Endothelial cell of umbilical vein (primary cell): ENCODE measurements at regions of chr10 and their contacts with region 1.

Region 1: GRCh38 chr10:33330543-33331378 is 3.7 kb downstream of the NRP1 start:
- DNase-seq: peak; percentile 92
- H3K4me3 ChIP-seq: peak overlapping the region; percentile 90 to 100 (median 97)
- H3K27ac ChIP-seq: peak overlapping the region; percentile 84
- H3K4me1 ChIP-seq: peaks cover 45% of the 10 kb centered on the region
- H3K27me3 ChIP-seq: no peaks in the 10 kb centered on the region
- CTCF ChIP-seq: peak; percentile 69 to 88
- POLR2A ChIP-seq: no peak

Region 2: DNA sequence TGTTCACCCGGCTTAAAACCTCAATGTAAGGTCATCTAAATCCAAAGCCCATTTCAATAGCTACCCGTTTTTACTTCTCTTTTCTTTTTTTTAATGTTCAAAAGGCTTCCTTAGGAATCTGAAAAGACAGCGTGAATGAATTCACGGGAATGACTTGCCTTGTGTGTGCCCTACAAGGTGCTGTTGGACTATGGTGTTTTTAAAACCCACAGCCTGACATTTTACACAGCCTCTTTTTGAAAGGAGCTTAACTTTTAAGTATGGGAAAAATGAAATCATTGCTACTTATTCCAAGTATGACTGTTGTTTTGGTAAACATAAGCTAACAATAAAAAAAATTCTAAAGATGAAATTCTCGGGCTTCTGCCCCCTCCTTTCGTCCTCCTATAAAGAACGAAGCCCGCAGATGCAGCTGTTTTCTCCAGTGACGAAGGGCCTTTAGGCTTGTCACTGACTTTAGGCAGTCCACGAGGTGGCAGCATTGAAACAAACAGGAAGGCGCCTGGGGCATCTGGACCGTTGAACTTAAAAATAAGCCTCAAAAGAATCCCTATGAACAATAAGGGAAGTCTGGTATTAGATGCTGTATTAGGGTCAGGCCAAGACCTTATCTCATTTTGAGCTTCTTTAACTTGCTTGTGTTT is 137.6 kb before region 1 on chr10:
- CTCF ChIA-PET with region 1: interaction called, 37 read pairs
- POLR2A ChIA-PET with region 1: no interaction called
- dilution Hi-C with region 1: no loop called
- intact Hi-C with region 1: loop called (anchors 1 kb)
- DNase-seq: peak; percentile 86
- H3K4me3 ChIP-seq: no peak overlapping the region
- H3K27ac ChIP-seq: peak overlapping the region; percentile 59
- H3K4me1 ChIP-seq: peaks cover 50% of the 10 kb centered on the region
- H3K27me3 ChIP-seq: no peaks in the 10 kb centered on the region
- CTCF ChIP-seq: peak; percentile 72 to 75
- POLR2A ChIP-seq: peak; percentile 23

Region 3: DNA sequence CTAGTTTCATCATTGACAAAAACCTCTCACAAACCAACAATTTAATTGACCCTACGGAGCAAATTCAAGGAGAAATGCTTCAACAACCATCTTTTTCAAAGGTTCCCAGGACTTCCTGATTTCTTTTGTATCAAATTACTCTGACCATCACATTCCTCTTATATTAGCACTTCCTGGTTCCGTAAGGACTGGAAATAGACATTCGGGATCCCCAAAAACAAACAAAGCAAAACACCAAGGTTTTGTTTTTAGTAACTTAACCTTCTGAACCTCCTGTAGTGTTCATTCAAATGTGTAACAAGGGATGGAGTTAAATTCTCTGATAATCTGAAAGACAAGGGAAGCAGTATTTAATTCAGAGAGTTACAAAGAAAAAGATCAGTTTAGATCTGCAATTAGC is 391.3 kb after region 1 on chr10:
- CTCF ChIA-PET with region 1: interaction called, 5 read pairs
- POLR2A ChIA-PET with region 1: no interaction called
- dilution Hi-C with region 1: no loop called
- intact Hi-C with region 1: loop called (anchors 2 kb)
- DNase-seq: peak; percentile 26
- H3K4me3 ChIP-seq: no peak overlapping the region
- H3K27ac ChIP-seq: peak overlapping the region; percentile 37
- H3K4me1 ChIP-seq: peaks cover 18% of the 10 kb centered on the region
- H3K27me3 ChIP-seq: no peaks in the 10 kb centered on the region
- CTCF ChIP-seq: no peak
- POLR2A ChIP-seq: no peak

Region 4: GRCh38 chr10:34078745-34079470 is 748.1 kb after region 1 on chr10:
- CTCF ChIA-PET with region 1: interaction called, 4 read pairs
- POLR2A ChIA-PET with region 1: no interaction called
- dilution Hi-C with region 1: no loop called
- intact Hi-C with region 1: loop called (anchors 1 kb)
- DNase-seq: peak; percentile 87
- H3K4me3 ChIP-seq: no peak overlapping the region
- H3K27ac ChIP-seq: no peak overlapping the region
- H3K4me1 ChIP-seq: peaks cover 6% of the 10 kb centered on the region
- H3K27me3 ChIP-seq: peaks cover 0 to 2% of the 10 kb centered on the region in 2 experiments
- CTCF ChIP-seq: no peak
- POLR2A ChIP-seq: no peak

Region 5: DNA sequence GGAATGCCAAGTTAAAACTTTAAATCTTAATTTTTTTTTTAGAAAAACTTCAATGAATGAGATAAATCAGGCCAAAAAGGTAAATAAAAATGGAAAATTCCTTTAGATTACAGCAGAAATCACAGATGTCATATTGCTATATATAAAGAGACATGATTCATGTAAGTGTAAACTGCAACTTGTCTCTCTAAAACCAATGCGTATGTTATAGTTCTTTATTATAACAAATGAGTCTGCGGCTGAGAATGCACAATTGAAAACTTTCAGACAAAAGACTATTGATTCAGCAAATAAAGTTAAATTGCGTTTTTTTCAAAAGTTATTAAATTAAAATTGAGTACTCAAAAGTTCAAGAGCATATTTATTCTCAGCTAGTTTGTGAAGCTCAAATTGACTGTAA is 1059.0 kb after region 1 on chr10:
- CTCF ChIA-PET with region 1: interaction called, 6 read pairs
- POLR2A ChIA-PET with region 1: no interaction called
- dilution Hi-C with region 1: no loop called
- intact Hi-C with region 1: loop called (anchors 2 kb)
- DNase-seq: no peak
- H3K4me3 ChIP-seq: no peak overlapping the region
- H3K27ac ChIP-seq: no peak overlapping the region
- H3K4me1 ChIP-seq: no peaks in the 10 kb centered on the region
- H3K27me3 ChIP-seq: no peaks in the 10 kb centered on the region
- CTCF ChIP-seq: no peak
- POLR2A ChIP-seq: no peak

Region 6: GRCh38 chr10:34528320-34528719 is 1197.6 kb after region 1 on chr10:
- CTCF ChIA-PET with region 1: interaction called, 5 read pairs
- POLR2A ChIA-PET with region 1: no interaction called
- dilution Hi-C with region 1: no loop called
- intact Hi-C with region 1: loop called (anchors 1 kb)
- DNase-seq: peak; percentile 83
- H3K4me3 ChIP-seq: no peak overlapping the region
- H3K27ac ChIP-seq: peak overlapping the region; percentile 89
- H3K4me1 ChIP-seq: peaks cover 30% of the 10 kb centered on the region
- H3K27me3 ChIP-seq: no peaks in the 10 kb centered on the region
- CTCF ChIP-seq: no peak
- POLR2A ChIP-seq: no peak